OCI-LY7 (cell line): ENCODE measurements at regions of chr9 and their contacts with region 1.

Region 1: GRCh38 chr9:104386425-104387069 is 117.5 kb upstream of the OR13F1 start:
- DNase-seq: peak; percentile 30
- H3K4me3 ChIP-seq: no peak overlapping the region
- H3K27ac ChIP-seq: no peak overlapping the region
- H3K4me1 ChIP-seq: no peaks in the 10 kb centered on the region
- CTCF ChIP-seq: peak; percentile 85

Region 2: GRCh38 chr9:103397868-103398600 is 988.5 kb before region 1 on chr9:
- CTCF ChIA-PET with region 1: no interaction called
- POLR2A ChIA-PET with region 1: no interaction called
- intact Hi-C with region 1: loop called (anchors 10 kb)
- DNase-seq: peak; percentile 31
- H3K4me3 ChIP-seq: no peak overlapping the region
- H3K27ac ChIP-seq: no peak overlapping the region
- H3K4me1 ChIP-seq: no peaks in the 10 kb centered on the region
- CTCF ChIP-seq: peak; percentile 79

Region 3: DNA sequence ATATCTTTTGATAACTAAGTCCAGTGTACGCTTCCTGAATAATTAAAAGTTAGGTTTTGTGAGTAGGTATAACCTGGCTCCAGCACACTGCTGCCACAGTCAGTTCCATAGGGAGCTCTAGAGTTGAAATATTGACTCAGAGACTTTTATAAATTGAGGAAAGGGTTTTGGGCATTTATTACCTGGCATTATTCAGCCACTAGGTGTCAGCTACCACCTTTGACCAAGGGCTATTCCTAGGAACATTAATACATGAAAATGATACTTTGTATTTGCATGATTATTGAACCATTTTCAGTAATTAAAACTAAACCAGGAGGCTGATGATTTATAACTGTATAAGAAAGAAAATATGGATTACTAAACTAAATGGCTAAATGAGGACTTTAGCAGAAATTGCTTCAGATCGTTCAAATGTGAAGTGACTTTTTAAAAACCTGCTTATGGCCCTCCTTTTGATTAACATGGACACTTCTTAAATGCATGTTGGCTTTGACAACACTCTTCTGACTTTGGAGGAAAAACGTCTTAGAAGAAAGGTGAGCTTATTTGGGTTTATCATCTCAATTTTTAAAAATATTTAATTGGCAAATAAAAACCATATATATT is 209.4 kb before region 1 on chr9:
- CTCF ChIA-PET with region 1: no interaction called
- POLR2A ChIA-PET with region 1: no interaction called
- intact Hi-C with region 1: loop called (anchors 5 kb)
- DNase-seq: peak; percentile 23
- H3K4me3 ChIP-seq: no peak overlapping the region
- H3K27ac ChIP-seq: no peak overlapping the region
- H3K4me1 ChIP-seq: no peaks in the 10 kb centered on the region
- CTCF ChIP-seq: peak; percentile 81

Region 4: DNA sequence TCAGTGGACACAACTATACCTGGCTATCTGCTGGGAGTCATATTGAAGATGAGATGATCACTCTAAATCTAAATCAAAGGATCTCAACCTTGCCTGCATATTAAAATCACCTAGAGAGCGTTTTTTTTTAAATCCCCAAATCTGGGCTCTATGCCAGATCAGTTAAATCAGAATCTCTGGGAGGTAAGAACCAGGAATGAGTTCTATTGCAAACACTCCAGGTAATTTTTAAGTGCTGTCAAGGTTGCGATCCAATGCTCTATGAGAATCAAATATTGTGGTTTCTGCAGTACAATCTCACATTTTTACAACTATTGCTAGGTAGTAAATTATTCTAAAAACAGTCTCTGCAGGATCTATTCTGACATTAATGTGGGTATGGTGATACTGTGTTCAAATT is 84.8 kb before region 1 on chr9:
- CTCF ChIA-PET with region 1: no interaction called
- POLR2A ChIA-PET with region 1: no interaction called
- intact Hi-C with region 1: no loop called
- DNase-seq: no peak
- H3K4me3 ChIP-seq: no peak overlapping the region
- H3K27ac ChIP-seq: no peak overlapping the region
- H3K4me1 ChIP-seq: no peaks in the 10 kb centered on the region
- CTCF ChIP-seq: no peak

Region 5: DNA sequence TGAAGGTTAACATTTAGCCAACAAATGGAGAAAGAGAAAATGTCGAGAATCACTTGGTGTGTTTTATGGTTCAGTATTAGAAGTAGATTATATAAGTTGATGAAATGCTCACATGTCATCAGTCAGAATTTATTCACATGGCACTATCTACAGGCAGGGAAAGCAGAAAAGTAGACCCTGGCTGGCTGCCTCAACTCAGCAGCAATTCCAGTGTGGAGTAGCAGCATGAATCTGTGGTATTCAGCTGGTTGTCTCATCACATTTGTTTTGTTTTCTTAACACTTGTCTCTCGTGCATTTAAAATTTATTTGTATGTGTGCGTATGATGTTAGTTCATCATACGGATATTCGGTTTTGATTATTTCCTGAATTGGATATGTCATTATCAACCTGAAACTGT is 36.0 kb before region 1 on chr9:
- CTCF ChIA-PET with region 1: no interaction called
- POLR2A ChIA-PET with region 1: no interaction called
- intact Hi-C with region 1: no loop called
- DNase-seq: no peak
- H3K4me3 ChIP-seq: no peak overlapping the region
- H3K27ac ChIP-seq: no peak overlapping the region
- H3K4me1 ChIP-seq: no peaks in the 10 kb centered on the region
- CTCF ChIP-seq: no peak